Heart left ventricle (tissue), 16 donors: ENCODE measurements at regions of chr1 and their contacts with region 1.

Region 1: DNA sequence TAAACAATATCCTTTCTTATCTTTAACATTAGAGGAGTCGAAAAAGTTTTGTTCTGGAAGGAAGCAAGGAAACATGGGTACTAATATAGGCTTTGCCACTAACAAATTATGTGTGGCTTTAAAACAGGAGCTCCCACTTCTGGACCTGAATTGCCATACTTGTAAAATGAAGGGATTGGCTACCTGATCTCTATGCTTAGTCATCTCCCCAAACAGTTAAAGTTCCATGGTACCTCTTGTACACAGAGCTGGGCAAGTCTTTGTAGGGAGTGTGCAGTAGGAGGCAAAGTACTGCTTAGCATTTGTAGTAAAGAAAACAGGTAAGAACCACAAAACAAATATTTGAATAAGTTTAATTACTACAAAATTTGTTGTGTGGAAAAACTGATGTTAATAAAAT is 81.3 kb downstream of the MAST2 start:
- DNase-seq: no peak
- ATAC-seq: peak in 1 of 4 donors; percentile 46
- H3K4me3 ChIP-seq: no peak overlapping the region
- H3K27ac ChIP-seq: no peak overlapping the region
- H3K4me1 ChIP-seq: peaks cover 0 to 4% (median 0%) of the 10 kb centered on the region in 12 donors
- H3K27me3 ChIP-seq: no peaks in the 10 kb centered on the region
- CTCF ChIP-seq: no peak
- POLR2A ChIP-seq: no peak

Region 2: DNA sequence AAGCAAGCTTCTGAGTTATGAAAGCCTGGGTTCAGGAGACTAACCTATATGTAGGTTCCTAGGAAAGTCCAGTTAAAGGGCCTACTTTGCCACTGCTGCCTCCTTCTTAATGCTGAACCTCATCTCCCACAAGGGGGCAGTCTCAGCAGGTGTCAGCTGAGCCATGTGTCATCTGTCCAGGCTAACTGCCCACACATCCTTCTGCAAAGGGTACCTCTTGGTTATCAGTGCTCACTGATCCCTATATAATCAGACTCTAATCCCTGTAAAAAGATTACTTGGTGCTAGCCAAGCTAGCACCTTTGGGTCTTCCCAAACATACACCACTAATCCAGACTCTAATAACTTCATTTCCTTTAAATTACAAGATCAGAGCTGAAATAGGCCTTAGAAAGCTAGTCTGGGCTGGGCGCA is 372.1 kb before region 1 on chr1:
- intact Hi-C with region 1: loop called in 1 of 10 experiments (anchors 10 kb)
- DNase-seq: peak in 4 of 5 donors; percentile 54 to 62 (median 56)
- ATAC-seq: peak in 3 of 4 donors; percentile 66 to 70 (median 69)
- H3K4me3 ChIP-seq: no peak overlapping the region
- H3K27ac ChIP-seq: no peak overlapping the region
- H3K4me1 ChIP-seq: peaks cover 0 to 28% (median 16%) of the 10 kb centered on the region in 12 donors
- H3K27me3 ChIP-seq: no peaks in the 10 kb centered on the region
- CTCF ChIP-seq: peak; percentile 51 to 81 (median 68)
- POLR2A ChIP-seq: no peak

Region 3: DNA sequence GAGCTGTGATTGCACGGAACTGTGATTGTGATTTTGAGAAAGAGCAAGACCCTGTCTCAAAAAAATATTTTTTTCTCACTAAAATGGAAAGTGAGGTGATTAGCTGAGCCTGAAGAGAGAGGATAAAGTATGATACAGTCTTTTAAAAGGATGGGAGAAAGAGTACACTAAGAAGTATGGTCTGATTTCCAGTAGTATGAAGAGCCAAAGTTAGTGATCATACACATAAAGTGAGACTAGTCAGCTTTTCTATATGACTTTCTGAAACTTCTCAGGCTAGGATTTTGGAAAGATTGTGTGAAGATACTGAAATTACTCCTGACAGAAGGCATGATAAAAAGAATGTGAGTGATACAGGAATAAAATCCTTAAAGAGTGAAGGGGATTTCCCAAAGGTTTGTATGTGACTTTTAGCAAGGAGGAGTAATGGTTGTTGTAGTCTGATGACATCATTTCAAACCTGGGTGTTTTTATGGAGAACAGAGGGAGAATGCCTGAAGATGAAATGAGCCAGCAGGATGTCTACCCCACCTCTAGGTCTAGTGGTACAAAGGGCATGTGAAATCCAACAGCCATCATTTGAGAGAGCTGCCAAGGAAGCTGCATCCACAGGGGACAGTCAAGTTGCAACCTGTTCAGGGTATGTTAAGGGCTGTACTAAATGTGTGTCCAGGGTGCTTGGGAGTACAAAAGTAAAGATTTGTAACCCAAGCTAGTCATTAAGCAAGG is 90.0 kb after region 1 on chr1:
- intact Hi-C with region 1: no loop called
- DNase-seq: no peak
- ATAC-seq: no peak
- H3K4me3 ChIP-seq: no peak overlapping the region
- H3K27ac ChIP-seq: no peak overlapping the region
- H3K4me1 ChIP-seq: peaks cover 0 to 15% (median 0%) of the 10 kb centered on the region in 12 donors
- H3K27me3 ChIP-seq: no peaks in the 10 kb centered on the region
- CTCF ChIP-seq: no peak
- POLR2A ChIP-seq: no peak